Dorsolateral prefrontal cortex (tissue), 120 donors: ENCODE measurements at regions of chr12 and their contacts with region 1.

Region 1: GRCh38 chr12:70242695-70243509 is at the start of gene CNOT2:
- DNase-seq: peak; percentile 79 to 90 (median 85)
- H3K4me3 ChIP-seq: peak within 1 kb of the TSS; percentile 70 to 99 (median 93)
- H3K27ac ChIP-seq: peak within 1 kb of the TSS; percentile 82 to 99 (median 95)
- H3K27me3 ChIP-seq: no peaks in the 10 kb centered on the region
- CTCF ChIP-seq: peak in 19 of 56 donors; percentile 2 to 29 (median 12)
- total RNA-seq, gene CNOT2: 63.7 to 156 (median 84.5) TPM

Region 2: DNA sequence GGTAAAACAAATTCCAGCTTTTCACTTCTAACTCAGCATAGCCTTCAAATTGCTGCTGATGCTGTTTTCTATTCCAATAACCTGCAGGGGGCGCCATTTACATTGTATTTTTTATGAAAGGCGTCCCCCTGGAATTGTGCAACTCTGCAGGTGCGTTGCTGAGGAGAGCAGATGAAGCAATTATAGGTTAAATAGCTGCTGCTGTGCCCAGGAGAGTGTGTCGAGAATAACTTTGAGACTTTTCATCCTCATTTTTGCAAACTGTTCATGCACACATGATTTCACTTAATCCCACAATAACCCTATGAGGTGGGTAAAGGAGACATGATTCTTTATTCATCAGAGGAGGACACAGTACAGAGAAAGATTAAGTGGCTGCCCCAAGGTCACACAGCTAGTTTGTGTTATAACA is 342.2 kb before region 1 on chr12:
- intact Hi-C with region 1: loop called (anchors 5 to 10 kb)
- DNase-seq: peak in 7 of 10 donors; percentile 57 to 88 (median 70)
- H3K4me3 ChIP-seq: peak overlapping the region in 1 of 59 donors; percentile 6
- H3K27ac ChIP-seq: peak overlapping the region in 8 of 59 donors; percentile 2 to 82 (median 55)
- H3K27me3 ChIP-seq: no peaks in the 10 kb centered on the region
- CTCF ChIP-seq: peak; percentile 79 to 95 (median 90)